Vagina (tissue), 2 donors: ENCODE measurements at regions of chr12 and their contacts with region 1.

Region 1: DNA sequence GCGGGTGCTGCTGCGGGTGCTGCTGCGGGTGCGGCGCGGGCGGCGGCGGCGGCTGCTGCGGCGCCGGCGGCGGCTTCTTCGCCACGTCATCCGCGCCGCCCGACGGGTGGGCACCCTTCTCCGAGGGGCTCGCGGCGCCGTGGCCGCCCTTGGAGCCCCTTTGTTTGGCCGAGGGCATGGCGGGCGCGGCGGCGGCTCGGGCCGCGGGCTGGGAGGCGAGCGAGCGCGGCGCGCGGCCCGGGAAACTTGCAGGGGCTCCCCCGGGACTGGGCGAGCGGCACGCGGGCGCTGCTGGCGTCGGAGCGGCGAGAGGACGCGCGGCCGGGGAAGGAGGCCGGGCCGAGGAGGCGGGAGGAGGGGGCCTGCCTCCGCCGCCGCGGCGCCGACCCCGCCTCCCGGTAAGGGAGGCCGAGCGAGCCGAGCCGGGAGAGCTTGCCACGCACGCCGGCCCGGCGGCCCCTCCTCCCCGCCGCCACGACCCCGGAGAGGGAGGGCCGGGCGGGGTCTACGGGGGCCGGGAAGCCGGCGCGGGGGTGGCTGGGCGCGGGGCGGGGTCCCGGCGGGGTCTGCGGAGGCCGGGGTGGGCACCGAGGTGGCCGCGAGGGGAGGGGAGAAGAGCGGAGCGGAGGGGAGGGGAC is at the start of gene CKAP4:
- DNase-seq: peak; percentile 25 to 77
- H3K4me3 ChIP-seq: peak within 1 kb of the TSS; percentile 76 to 84
- H3K27ac ChIP-seq: peak within 1 kb of the TSS; percentile 99
- H3K4me1 ChIP-seq: peaks cover 56% of the 10 kb centered on the region
- H3K27me3 ChIP-seq: no peaks in the 10 kb centered on the region
- CTCF ChIP-seq: no peak
- POLR2A ChIP-seq: peak in 1 of 2 donors; percentile 48
- total RNA-seq, gene CKAP4: 42.5 TPM

Region 2: GRCh38 chr12:106302401-106303201 is 54.8 kb after region 1 on chr12 and contains the start of gene TCP11L2:
- intact Hi-C with region 1: loop called (anchors 1 kb)
- DNase-seq: no peak
- H3K4me3 ChIP-seq: peak within 1 kb of the TSS; percentile 92 to 96
- H3K27ac ChIP-seq: peak within 1 kb of the TSS; percentile 99
- H3K4me1 ChIP-seq: peaks cover 59% of the 10 kb centered on the region
- H3K27me3 ChIP-seq: no peaks in the 10 kb centered on the region
- CTCF ChIP-seq: no peak
- POLR2A ChIP-seq: peak in 1 of 2 donors; percentile 35
- total RNA-seq, gene TCP11L2: 47.1 TPM

Region 3: DNA sequence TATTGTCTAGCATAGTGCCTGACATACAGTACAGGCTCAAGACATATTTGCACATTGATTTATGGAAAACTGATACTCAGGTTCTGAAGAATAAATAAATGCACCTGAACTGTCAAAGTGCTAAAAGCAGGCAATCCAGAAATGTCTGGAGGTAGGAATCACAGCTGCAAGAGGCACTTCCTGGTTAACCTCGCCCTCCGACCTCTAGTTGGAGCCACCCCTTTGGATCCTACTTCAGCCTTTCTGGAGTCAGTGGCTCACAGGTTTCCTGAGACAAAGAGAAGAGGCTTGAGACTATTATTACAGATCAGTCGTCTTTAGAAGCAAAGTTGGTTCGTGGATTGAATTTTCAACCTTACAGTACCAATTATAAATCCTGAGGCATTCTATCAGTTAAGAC is 67.7 kb after region 1 on chr12:
- intact Hi-C with region 1: no loop called
- DNase-seq: no peak
- H3K4me3 ChIP-seq: no peak overlapping the region
- H3K27ac ChIP-seq: no peak overlapping the region
- H3K4me1 ChIP-seq: peaks cover 12% of the 10 kb centered on the region
- H3K27me3 ChIP-seq: no peaks in the 10 kb centered on the region
- CTCF ChIP-seq: no peak
- POLR2A ChIP-seq: no peak